ENCODE measurements at regions of chr6 and their contacts with region 1.

Region 1: DNA sequence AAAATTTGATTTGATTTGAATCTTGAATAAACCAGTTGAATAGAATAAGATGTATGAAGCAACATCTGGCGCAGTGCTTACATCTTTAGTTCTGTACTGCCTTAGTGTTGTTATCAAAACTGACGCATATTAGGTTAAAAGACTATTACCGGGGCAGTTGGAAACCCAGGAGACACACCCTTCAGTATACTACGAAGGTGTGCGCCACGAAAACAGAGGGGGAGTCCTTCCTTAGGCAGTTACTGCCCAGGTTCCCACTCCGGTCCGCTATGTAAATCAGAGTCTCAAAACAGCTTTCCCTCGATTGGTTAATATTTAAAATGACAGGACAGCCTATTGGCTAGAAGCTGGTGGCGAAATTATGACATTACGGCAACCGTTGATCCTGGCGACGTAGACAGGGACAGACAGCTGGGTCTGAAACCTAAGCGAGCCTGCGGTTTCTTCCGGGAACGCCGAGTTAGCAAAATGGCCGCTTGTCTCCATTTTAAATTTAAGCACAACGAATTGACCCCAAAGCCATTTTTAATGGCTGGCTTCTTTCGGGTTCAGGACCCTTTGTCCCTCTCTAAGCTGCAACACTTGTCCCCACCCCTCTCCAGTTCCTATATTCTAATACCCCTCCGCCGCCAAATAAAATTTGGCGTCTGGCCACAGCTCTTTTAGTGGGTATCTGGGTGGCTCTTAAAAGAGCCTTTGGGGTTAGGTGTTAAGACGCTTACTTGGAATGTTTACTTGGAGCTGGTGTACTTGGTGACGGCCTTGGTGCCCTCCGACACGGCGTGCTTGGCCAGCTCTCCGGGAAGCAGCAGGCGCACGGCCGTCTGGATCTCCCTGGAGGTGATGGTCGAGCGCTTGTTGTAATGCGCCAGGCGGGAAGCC is 35.8 kb downstream of the HFE start:
- DNase-seq: peak; percentile 91
- H3K4me3 Mint-ChIP-seq: peak overlapping the region; percentile 100
- H3K27ac Mint-ChIP-seq: peak overlapping the region; percentile 99
- H3K4me1 Mint-ChIP-seq: peaks cover 42% of the 10 kb centered on the region
- H3K27me3 Mint-ChIP-seq: no peaks in the 10 kb centered on the region

Region 2: DNA sequence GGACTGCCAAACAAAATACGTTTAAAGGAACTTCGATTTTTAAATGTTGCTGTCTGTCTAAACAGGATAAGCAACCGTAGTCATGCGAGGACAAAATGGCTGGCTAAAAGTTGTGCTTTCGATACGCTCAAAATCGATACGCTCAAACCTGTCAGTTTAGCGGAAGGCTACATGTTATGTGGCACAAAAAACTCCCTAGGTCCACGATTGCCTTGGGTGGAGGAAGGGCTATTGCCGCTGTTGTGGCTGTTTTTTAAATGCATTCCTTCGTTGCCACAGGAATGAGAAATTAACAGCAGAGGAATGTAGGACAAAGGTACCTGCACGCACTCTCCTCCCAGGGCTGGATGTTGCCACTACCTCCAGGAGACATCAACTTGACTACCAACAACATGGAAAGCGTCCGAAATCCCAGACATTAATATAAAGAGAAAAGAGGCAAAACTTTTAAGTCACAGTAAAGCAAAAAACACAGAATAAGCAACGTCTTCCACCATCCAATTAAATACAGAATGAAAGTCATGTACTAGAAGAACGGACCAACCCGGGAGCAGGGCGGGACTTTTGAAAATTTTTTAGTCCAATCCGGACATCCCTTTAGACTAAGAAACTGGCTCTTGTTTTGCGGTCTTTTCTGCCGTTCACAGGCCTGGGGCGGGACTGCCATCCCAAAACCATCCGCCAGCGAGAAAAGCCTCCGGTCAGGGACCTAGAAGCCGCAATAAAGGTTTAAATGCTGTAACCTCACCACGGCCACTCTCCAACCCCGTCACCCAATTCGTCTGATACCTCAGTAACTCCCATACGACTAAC is 68.0 kb before region 1 on chr6:
- intact Hi-C with region 1: loop called (anchors 1 kb)
- DNase-seq: peak; percentile 85
- H3K4me3 Mint-ChIP-seq: peak overlapping the region; percentile 90
- H3K27ac Mint-ChIP-seq: peak overlapping the region; percentile 99
- H3K4me1 Mint-ChIP-seq: peaks cover 33% of the 10 kb centered on the region
- H3K27me3 Mint-ChIP-seq: no peaks in the 10 kb centered on the region

Region 3: DNA sequence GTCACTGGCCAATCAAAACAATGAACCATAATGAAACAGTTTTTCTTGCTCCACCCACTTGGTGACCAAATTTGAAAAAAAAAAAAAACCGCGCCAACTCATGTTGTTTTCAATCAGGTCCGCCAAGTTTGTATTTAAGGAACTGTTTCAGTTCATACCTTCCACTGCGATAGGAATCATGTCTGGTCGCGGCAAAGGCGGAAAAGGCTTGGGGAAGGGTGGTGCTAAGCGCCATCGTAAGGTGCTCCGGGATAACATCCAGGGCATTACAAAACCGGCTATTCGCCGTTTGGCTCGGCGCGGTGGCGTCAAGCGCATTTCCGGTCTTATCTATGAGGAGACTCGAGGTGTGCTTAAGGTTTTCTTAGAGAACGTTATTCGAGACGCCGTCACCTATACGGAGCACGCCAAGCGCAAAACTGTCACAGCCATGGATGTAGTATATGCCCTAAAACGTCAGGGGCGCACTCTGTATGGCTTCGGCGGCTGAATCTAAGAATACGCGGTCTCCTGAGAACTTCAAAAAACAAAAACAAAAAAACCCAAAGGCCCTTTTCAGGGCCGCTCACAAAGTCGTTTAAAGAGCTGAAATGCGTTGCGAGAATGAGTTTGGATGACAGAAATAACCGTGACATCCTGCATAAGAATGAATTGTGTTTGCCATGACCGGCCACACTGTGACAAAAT is 19.1 kb before region 1 on chr6:
- intact Hi-C with region 1: loop called (anchors 1 kb)
- DNase-seq: peak; percentile 89
- H3K4me3 Mint-ChIP-seq: peak overlapping the region; percentile 76
- H3K27ac Mint-ChIP-seq: peak overlapping the region; percentile 95
- H3K4me1 Mint-ChIP-seq: peaks cover 19% of the 10 kb centered on the region
- H3K27me3 Mint-ChIP-seq: peaks cover 3% of the 10 kb centered on the region

Region 4: GRCh38 chr6:26175428-26176181 is 52.6 kb after region 1 on chr6:
- intact Hi-C with region 1: loop called (anchors 1 kb)
- DNase-seq: peak; percentile 52
- H3K4me3 Mint-ChIP-seq: peak overlapping the region; percentile 56
- H3K27ac Mint-ChIP-seq: peak overlapping the region; percentile 63
- H3K4me1 Mint-ChIP-seq: peaks cover 45% of the 10 kb centered on the region
- H3K27me3 Mint-ChIP-seq: no peaks in the 10 kb centered on the region

Region 5: DNA sequence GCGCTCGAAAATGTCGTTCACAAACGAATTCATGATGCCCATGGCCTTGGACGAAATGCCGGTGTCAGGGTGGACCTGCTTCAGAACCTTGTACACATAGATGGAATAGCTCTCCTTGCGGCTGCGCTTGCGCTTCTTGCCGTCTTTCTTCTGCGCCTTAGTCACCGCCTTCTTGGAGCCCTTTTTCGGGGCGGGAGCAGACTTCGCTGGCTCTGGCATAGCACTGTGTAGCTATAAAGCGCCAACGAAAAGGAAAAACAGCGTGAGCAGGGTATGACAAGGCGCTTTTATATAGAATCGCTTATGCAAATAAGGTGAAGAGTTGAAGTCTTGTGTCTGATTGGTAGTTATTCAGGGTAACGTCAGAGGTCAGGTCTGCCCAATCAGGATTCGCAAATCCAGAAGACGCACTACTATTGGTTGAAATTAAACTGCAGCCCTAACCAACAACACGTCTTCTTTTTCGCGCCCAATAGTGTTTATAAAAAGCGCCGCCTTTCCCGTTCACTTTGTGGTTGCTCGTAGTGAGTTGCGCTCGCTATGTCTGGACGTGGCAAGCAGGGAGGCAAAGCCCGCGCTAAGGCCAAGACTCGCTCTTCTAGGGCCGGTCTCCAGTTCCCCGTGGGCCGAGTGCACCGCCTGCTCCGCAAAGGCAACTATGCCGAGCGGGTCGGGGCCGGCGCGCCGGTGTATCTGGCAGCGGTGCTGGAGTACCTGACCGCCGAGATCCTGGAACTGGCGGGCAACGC is 1009.7 kb after region 1 on chr6:
- intact Hi-C with region 1: loop called (anchors 2 kb)
- DNase-seq: peak; percentile 95
- H3K4me3 Mint-ChIP-seq: no peak overlapping the region
- H3K27ac Mint-ChIP-seq: no peak overlapping the region
- H3K4me1 Mint-ChIP-seq: peaks cover 38% of the 10 kb centered on the region
- H3K27me3 Mint-ChIP-seq: no peaks in the 10 kb centered on the region

Measured in activated T-helper 2 cell treated with anti-CD3 and anti-CD28 coated beads, Interferon-gamma antibody, Interleukin-2, Interleukin-4, amounts not matched to agents 10 μg/mL and 5 μg/mL and 100 μg/mL, durations not matched to agents 14 hours and 24 hours and 36 hours (primary cell).